Prostate gland (tissue), 2 donors: ENCODE measurements at regions of chr19 and their contacts with region 1.

Region 1: DNA sequence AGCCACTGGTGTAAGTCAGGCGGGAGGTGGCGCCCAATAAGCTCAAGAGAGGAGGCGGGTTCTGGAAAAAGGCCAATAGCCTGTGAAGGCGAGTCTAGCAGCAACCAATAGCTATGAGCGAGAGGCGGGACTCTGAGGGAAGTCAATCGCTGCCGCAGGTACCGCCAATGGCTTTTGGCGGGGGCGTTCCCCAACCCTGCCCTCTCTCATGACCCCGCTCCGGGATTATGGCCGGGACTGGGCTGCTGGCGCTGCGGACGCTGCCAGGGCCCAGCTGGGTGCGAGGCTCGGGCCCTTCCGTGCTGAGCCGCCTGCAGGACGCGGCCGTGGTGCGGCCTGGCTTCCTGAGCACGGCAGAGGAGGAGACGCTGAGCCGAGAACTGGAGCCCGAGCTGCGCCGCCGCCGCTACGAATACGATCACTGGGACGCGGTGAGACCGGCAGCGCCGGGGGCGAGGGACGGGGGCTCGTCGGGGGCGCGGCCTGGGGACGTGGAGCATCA is at the start of gene ALKBH7:
- DNase-seq: peak; percentile 100
- H3K4me3 ChIP-seq: peak within 1 kb of the TSS; percentile 74 to 85
- H3K27ac ChIP-seq: peak within 1 kb of the TSS; percentile 99
- H3K4me1 ChIP-seq: peaks cover 3% of the 10 kb centered on the region
- H3K27me3 ChIP-seq: no peaks in the 10 kb centered on the region
- CTCF ChIP-seq: peak in 1 of 4 experiments; percentile 2
- POLR2A ChIP-seq: peak; percentile 71
- total RNA-seq, gene ALKBH7: 101 to 111 TPM

Region 2: DNA sequence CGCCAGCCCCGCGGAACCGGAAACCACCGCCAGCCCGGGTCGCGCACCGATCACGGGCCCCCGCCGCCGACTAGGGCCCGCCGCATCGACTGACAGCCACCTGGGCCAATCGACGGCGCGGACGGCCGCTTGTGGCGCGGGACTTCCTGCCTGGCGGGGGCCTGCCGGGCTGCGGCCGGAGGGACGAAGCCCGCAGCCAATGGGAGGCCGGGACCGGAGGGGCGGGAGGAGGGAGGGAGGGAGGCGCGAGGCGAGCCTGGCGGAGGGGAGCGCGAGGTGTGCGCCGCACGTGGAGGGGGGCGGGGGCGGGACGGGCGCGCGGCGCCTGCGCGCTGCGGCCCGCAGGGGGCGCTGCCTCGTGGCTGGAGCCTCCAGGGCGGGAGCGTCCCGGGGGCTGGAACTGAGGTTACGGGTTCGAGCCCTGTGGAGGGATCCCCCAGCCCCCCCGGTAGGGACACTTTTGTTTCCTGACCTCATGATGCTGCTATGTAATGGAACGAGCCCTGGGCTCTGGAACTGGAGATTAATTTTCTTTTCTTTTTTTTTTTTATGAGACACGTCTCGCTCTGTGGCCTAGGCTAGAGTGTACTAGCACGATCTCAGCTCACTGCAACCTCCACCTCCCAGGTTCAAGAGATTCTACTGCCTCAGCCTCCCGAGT is 92.6 kb before region 1 on chr19 and contains the start of gene MLLT1:
- intact Hi-C with region 1: loop called (anchors 5 kb)
- DNase-seq: peak; percentile 97
- H3K4me3 ChIP-seq: peak within 1 kb of the TSS; percentile 76 to 83
- H3K27ac ChIP-seq: peak within 1 kb of the TSS; percentile 62 to 81
- H3K4me1 ChIP-seq: peaks cover 9% of the 10 kb centered on the region
- H3K27me3 ChIP-seq: no peaks in the 10 kb centered on the region
- CTCF ChIP-seq: peak; percentile 50 to 85 (median 78)
- POLR2A ChIP-seq: peak; percentile 43
- total RNA-seq, gene MLLT1: 39.9 to 41.4 TPM

Region 3: DNA sequence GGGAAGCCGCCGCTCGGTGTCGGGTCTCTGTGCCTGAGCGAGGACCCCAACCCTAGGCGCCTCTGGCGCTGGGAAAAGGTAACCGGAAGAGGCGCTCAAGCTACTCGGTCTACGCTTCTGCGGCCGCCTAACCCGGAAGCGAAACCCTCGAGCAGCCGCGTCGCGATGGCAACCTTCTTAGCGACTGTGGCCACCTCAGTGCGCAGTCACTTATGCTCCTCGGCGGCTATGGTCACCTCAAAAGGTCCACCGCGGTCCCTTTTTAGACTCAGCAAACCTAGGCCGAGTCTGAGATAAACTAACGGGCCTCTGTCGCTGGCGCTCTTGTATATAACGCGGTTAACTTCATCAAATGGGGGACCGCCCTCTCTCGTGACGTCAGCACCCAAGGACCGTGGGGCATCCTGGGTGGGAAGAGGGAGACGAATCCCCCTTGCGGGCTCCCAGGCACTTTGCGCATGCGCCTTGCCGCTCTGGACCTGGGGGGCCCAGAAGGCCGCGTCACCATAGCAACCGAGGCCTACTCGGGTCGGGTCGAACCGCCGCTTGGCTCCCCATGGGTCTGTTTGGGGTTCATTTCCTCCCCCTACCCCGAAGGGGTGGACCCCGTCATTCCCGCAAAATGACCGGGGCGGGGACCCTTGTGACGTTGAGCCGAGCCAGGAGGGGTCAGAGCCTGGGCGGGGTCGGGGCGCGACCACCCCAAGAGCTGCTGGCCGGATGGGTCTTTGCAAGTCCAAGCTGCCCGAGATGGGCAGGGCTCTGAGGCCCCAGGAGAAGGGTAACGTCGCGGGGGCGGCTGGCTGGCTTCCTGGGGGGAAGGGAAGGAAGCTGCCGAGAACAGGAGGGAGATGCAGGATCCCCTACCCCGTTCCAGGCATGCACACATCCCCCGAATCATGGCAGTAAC is 20.7 kb after region 1 on chr19 and contains the start of gene GTF2F1:
- intact Hi-C with region 1: loop called (anchors 1 kb)
- DNase-seq: peak; percentile 83
- H3K4me3 ChIP-seq: peak within 1 kb of the TSS; percentile 74 to 85
- H3K27ac ChIP-seq: peak within 1 kb of the TSS; percentile 94 to 95
- H3K4me1 ChIP-seq: peaks cover 5% of the 10 kb centered on the region
- H3K27me3 ChIP-seq: no peaks in the 10 kb centered on the region
- CTCF ChIP-seq: peak in 1 of 4 experiments; percentile 17
- POLR2A ChIP-seq: peak; percentile 8
- total RNA-seq, gene GTF2F1: 70.7 to 82.7 TPM

Region 4: GRCh38 chr19:6406401-6406800 is 33.8 kb after region 1 on chr19:
- intact Hi-C with region 1: no loop called
- DNase-seq: no peak
- H3K4me3 ChIP-seq: no peak overlapping the region
- H3K27ac ChIP-seq: no peak overlapping the region
- H3K4me1 ChIP-seq: no peaks in the 10 kb centered on the region
- H3K27me3 ChIP-seq: no peaks in the 10 kb centered on the region
- CTCF ChIP-seq: no peak
- POLR2A ChIP-seq: no peak